ENCODE measurements at regions of chr5 and their contacts with region 1.

Region 1: DNA sequence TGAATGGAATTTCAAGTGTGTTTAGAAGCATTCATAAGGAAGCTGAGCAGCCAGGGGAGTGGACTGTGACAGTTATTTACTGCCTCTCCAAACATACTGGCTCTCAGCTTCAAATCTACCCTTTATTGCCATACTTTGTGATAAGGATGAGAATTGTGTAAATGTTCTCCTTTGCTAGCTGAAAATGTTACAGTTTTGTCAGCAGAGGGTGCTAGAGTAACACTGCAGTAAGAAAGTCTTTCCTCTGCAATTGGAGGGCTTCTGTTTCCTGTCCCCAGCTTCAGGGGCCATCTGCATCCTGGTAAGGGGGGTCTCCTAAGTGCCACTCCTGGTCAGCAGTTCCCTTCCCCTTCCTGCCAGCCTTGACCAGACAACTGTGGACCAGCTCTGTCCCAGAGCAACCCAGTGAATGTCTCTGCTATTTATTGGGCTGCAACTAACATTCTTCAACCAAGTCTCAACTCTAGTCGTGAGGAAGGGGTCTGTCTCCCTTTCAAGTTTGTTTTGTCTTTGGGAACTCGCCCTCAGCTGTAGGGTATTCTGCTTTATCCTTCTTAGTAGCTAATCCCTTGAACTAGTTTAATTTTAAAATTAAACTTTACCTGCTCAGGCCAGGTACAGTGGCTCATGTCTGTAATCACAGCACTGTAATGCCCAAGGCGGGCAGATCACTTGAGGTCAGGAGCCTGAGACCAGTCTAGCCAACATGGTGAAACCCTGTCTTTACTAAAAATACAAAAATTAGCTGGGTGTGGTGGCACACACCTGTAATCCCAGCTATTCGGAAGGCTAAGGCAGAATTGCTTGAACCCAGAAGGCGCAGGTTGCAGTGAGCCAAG is 45.3 kb downstream of the RAPGEF6 start:
- DNase-seq: peak; percentile 34
- ATAC-seq: peak; percentile 79
- H3K4me3 ChIP-seq: no peak overlapping the region
- H3K27ac ChIP-seq: no peak overlapping the region
- H3K4me1 ChIP-seq: peaks cover 0 to 16% of the 10 kb centered on the region in 2 experiments; a peak in 2 of 4 replicates
- H3K27me3 ChIP-seq: no peaks in the 10 kb centered on the region
- CTCF ChIP-seq: peak; percentile 69 to 87 (median 79); a peak in 5 of 6 replicates
- POLR2A ChIP-seq: no peak
- RAD21 ChIP-seq: peak; percentile 86

Region 2: GRCh38 chr5:131563434-131564228 is 26.1 kb before region 1 on chr5:
- CTCF ChIA-PET with region 1: interaction called, 10 read pairs
- POLR2A ChIA-PET with region 1: no interaction called
- RAD21 ChIA-PET with region 1: no interaction called
- intact Hi-C with region 1: no loop called
- DNase-seq: no peak
- ATAC-seq: peak; percentile 44; the same call in 1 of the 2 replicates
- H3K4me3 ChIP-seq: no peak overlapping the region
- H3K27ac ChIP-seq: no peak overlapping the region
- H3K4me1 ChIP-seq: no peaks in the 10 kb centered on the region
- H3K27me3 ChIP-seq: no peaks in the 10 kb centered on the region
- CTCF ChIP-seq: 0 out of 6 replicates have a peak, but pooled peaks of 2 of the 3 experiments have one; percentile 1 to 19
- POLR2A ChIP-seq: no peak
- RAD21 ChIP-seq: no peak

Region 3: GRCh38 chr5:131796793-131797693 is 207.3 kb after region 1 on chr5 and contains the start of gene FNIP1:
- CTCF ChIA-PET with region 1: interaction called, 3 read pairs
- POLR2A ChIA-PET with region 1: no interaction called
- RAD21 ChIA-PET with region 1: interaction called in 1 of 2 experiments, 4 read pairs
- intact Hi-C with region 1: loop called (anchors 2 kb)
- DNase-seq: peak; percentile 85
- ATAC-seq: peak; percentile 95
- H3K4me3 ChIP-seq: peak within 1 kb of the TSS; percentile 90 to 95
- H3K27ac ChIP-seq: peak within 1 kb of the TSS; percentile 71
- H3K4me1 ChIP-seq: peaks cover 4 to 18% of the 10 kb centered on the region in 2 experiments; a peak in 3 of 4 replicates
- H3K27me3 ChIP-seq: no peaks in the 10 kb centered on the region
- CTCF ChIP-seq: no peak
- POLR2A ChIP-seq: peak; percentile 64
- RAD21 ChIP-seq: no peak
- total RNA-seq, gene FNIP1: 16.4 TPM

Region 4: GRCh38 chr5:131810510-131811249 is 221.0 kb after region 1 on chr5:
- CTCF ChIA-PET with region 1: interaction called, 6 read pairs
- POLR2A ChIA-PET with region 1: no interaction called
- RAD21 ChIA-PET with region 1: no interaction called
- intact Hi-C with region 1: loop called (anchors 5 kb)
- DNase-seq: peak; percentile 29
- ATAC-seq: peak; percentile 76
- H3K4me3 ChIP-seq: no peak overlapping the region
- H3K27ac ChIP-seq: no peak overlapping the region
- H3K4me1 ChIP-seq: peaks cover 0 to 9% of the 10 kb centered on the region in 2 experiments; a peak in 2 of 4 replicates
- H3K27me3 ChIP-seq: no peaks in the 10 kb centered on the region
- CTCF ChIP-seq: peak; percentile 27 to 77 (median 53); a peak in 4 of 6 replicates
- POLR2A ChIP-seq: no peak
- RAD21 ChIP-seq: peak; percentile 85

Region 5: DNA sequence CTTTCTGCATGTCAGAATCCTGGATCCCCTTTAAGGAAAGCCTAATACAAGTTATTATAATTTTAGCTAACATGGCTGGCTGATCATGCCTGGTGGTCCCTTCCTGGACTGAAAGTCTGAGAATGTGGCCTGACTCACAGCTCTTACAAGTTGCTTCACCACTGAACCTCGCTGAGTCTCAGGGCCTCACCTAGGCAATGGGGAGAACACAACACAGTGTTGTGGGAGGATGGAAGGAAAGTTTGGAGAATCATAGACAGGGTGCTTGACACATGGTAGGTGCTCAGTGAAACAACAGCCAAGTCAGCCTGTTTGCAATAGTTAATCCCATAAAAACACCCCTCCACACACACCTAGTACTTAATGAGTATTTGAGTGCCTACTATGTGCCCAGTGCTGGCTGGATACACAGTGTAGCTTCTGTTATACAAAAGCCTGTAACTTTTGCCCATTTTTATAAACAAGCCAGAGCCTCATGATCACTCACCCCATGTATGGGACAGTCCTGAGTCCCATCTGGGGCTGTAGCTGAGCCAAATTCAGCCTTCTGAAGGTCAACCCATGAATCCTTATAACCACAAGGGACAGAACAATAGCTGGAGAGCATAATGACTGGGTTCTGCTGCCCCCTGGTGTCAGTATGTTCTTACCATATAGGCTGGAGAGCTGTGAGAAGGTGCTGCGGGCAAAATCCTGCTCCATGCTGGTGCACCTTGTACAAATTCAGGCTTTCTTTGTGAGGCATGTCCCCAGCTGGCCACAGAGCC is 417.9 kb after region 1 on chr5:
- CTCF ChIA-PET with region 1: interaction called, 60 read pairs
- POLR2A ChIA-PET with region 1: no interaction called
- RAD21 ChIA-PET with region 1: interaction called, 10 read pairs
- intact Hi-C with region 1: loop called (anchors 1 kb)
- DNase-seq: peak; percentile 72
- ATAC-seq: peak; percentile 84
- H3K4me3 ChIP-seq: no peak overlapping the region
- H3K27ac ChIP-seq: no peak overlapping the region
- H3K4me1 ChIP-seq: peaks cover 0 to 7% of the 10 kb centered on the region in 2 experiments; a peak in 2 of 4 replicates
- H3K27me3 ChIP-seq: no peaks in the 10 kb centered on the region
- CTCF ChIP-seq: peak; percentile 74 to 88 (median 74)
- POLR2A ChIP-seq: no peak
- RAD21 ChIP-seq: peak; percentile 95

Measured in HCT116 (cell line).